ENCODE measurements at regions of chr1 and their contacts with region 1.

Region 1: DNA sequence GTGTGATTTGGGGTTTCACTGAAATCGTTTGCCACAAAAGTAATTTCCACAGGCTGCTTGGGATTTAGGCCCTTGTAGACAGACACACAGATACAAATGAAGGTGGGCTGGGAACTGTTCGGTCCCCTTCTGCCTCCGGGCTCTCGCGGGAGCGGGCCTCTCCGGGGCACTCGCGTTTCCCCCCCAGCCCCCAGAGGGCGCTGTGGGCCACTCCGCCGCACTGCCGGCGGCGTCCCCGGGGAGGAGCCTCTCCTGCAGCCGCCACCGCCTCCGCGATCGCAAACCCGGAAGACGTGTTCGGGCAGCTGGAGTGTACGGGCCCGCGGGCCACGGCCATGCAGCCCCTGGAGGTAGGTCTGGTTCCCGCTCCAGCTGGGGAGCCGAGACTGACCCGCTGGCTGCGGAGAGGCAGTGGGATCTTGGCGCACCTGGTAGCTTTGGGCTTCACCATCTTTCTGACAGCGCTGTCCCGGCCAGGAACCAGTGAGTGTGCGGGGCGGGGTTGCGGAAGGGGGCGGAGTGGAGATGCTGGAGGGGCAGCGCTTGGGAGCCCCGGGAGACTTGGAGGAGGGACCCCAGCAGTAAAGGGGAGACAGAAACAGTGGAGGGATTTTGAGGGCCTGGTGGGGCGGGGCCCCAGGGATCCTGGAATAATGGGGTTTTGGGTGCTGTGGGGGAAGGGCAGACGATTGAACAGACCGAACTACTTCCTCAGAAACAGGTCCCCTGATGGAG is at the start of gene CYB561D1:
- DNase-seq: peak; percentile 93
- H3K4me3 Mint-ChIP-seq: peak within 1 kb of the TSS; percentile 89
- H3K27ac Mint-ChIP-seq: peak within 1 kb of the TSS; percentile 78
- H3K4me1 Mint-ChIP-seq: peaks cover 44% of the 10 kb centered on the region
- H3K27me3 Mint-ChIP-seq: no peaks in the 10 kb centered on the region
- total RNA-seq, gene CYB561D1: 6.6 to 8.7 TPM

Region 2: DNA sequence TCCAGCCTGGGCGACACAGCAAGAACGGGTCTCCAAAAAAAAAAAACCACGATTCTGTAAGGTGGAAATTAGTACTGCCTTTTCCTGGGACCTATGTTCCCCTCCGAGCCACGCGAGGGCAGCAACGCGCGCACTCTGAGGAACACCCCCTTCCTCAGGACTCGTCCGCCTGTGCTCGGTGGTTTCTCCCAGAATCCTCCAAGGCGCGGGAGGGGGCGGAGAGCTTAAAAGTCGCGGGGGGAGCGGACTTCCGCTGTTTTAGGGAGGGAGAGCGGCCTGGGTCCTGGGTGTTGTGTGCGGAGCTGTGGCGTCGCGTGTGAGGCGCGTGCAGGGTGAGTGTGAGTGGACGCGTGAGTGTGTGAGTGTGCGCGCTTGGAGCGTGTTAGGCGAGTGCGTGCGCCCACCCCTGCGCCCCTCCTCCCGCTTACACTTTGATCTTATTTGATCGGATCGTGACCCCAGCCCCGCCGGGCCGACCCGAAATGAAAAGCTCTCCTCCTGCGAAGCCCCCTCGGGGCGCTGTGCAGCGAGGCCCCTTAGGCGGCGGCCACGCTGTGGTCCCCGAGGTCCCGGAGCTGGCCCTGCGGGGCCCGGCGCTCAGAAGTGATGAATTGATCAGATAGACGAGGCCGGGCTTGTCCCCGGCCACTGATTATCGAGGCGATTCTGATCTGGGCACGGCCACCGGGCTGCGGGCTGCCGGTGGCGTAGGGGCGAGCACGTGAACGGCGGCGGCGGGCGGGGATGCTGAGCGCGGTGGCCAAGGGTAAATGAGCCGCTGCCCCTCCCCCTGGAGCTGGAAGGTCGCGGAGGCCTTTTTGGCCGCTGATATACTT is 393.8 kb before region 1 on chr1:
- CTCF ChIA-PET with region 1: no interaction called
- POLR2A ChIA-PET with region 1: no interaction called
- intact Hi-C with region 1: loop called (anchors 5 kb)
- DNase-seq: peak; percentile 98
- H3K4me3 Mint-ChIP-seq: peak overlapping the region; percentile 98
- H3K27ac Mint-ChIP-seq: peak overlapping the region; percentile 99
- H3K4me1 Mint-ChIP-seq: peaks cover 14% of the 10 kb centered on the region
- H3K27me3 Mint-ChIP-seq: peaks cover 3% of the 10 kb centered on the region

Region 3: DNA sequence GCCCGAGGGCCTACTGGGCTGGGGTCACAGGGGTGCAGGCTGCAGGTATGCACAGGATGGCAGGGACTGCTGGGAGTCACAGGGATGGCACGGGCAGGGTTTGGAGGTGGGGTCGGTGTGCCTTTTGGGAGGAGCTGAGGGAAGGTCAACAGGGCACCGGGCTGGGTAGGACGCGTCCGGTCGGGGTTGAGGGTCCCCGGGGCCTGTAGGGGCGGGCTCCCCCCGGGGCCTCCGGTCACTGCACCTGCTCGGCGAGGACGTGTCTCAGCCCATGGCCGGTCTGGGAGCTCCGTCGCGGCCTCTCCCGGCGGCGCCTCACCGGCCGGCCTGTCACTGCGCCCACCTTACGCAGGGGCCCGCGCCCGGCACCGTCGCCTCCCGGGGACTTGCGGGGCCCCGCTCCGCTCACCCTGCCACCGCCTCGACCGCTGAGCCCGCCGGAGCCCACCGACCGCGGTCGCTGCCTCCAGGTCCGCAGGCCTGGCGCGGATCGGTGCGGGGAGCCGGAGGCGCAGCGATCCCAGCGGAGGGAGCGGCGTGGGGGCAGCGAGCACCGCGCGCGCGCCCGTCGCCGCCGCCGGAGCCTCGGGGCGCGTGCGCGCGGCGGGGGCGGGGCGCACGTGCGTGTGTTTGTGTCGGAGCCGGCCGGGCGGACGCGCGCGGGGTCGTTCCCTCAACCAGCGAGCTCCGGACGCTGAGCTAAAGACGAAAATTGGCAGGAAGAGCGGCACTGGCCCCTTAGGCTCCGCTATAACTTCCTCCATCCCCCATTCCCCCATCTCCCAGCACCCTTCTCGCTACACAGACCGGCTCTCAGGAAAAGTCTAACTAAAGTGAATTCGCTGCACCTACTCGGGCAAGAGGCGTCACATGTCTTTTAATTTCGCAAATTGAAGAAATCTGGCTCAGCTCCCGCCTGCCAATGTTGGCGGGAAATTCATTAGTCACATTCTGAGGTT is 15.5 kb after region 1 on chr1 and contains the start of gene AMIGO1:
- CTCF ChIA-PET with region 1: interaction called, 437 read pairs
- POLR2A ChIA-PET with region 1: interaction called, 15 read pairs
- intact Hi-C with region 1: no loop called
- DNase-seq: peak; percentile 67
- H3K4me3 Mint-ChIP-seq: peak within 1 kb of the TSS; percentile 82
- H3K27ac Mint-ChIP-seq: peak within 1 kb of the TSS; percentile 67
- H3K4me1 Mint-ChIP-seq: peaks cover 55% of the 10 kb centered on the region
- H3K27me3 Mint-ChIP-seq: no peaks in the 10 kb centered on the region
- total RNA-seq, gene AMIGO1: 1.8 to 2.2 TPM

Region 4: GRCh38 chr1:109516872-109517271 is 22.9 kb after region 1 on chr1:
- CTCF ChIA-PET with region 1: interaction called, 1,096 read pairs
- POLR2A ChIA-PET with region 1: no interaction called
- intact Hi-C with region 1: no loop called
- DNase-seq: no peak
- H3K4me3 Mint-ChIP-seq: no peak overlapping the region
- H3K27ac Mint-ChIP-seq: no peak overlapping the region
- H3K4me1 Mint-ChIP-seq: no peaks in the 10 kb centered on the region
- H3K27me3 Mint-ChIP-seq: no peaks in the 10 kb centered on the region